ENCODE measurements at regions of chr9 and their contacts with region 1.

Region 1: GRCh38 chr9:35954942-35955546 is 2.9 kb downstream of the OR2S2 start:
- DNase-seq: peak in 1 of 2 experiments; percentile 50
- H3K4me3 ChIP-seq: no peak overlapping the region
- H3K27ac ChIP-seq: no peak overlapping the region
- H3K4me1 ChIP-seq: no peaks in the 10 kb centered on the region
- H3K27me3 ChIP-seq: peaks cover 0 to 2% (median 0%) of the 10 kb centered on the region in 4 experiments; a peak in 1 of 7 replicates
- CTCF ChIP-seq: peak in 2 of 3 experiments; percentile 87 to 88; a peak in 3 of 4 replicates
- EP300 ChIP-seq: no peak
- POLR2A ChIP-seq: no peak
- RAD21 ChIP-seq: peak; percentile 86 to 88

Region 2: DNA sequence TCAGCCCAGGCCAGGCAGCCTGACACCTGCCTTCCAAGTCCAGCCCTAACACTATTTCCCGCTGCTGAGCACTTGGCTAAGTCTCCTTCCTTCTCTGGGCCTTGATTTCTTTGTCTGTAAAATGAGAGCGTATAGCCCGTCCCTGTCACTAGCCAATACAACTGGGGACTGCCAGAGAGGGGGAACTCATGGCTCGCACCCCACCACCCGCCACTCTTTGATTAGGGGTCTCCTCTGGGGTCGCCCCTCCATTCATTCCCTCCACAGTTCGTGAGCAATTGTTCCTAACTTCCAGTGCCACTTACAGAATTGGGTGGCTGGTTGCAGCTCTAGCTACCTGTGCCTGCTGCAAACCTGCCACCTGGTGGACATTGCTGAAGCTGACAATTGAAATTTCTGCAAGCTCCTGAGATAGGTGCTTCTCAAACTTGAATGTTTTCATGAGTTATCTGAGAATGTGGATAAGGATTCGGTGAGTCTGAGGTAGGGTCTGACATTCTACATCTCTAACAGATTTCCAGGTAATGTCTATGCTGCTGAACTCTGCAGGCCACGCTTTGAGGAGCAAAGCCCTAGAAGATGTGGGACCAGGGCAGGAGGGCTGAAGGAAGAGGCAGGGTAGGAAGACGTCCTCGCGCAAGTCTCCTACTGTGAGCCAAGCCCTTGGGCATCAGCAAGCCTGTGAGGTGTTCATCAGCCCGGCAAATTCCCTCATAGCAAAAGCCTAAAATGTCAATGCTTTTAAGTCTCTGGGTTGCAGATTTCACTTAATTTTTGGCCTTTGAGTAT is 68.4 kb after region 1 on chr9:
- CTCF ChIA-PET with region 1: interaction called, 102 read pairs
- POLR2A ChIA-PET with region 1: no interaction called
- DNase-seq: peak in 1 of 2 experiments; percentile 83
- H3K4me3 ChIP-seq: no peak overlapping the region
- H3K27ac ChIP-seq: no peak overlapping the region
- H3K4me1 ChIP-seq: no peaks in the 10 kb centered on the region
- H3K27me3 ChIP-seq: no peaks in the 10 kb centered on the region
- CTCF ChIP-seq: peak; percentile 74 to 95 (median 95)
- EP300 ChIP-seq: no peak
- POLR2A ChIP-seq: no peak
- RAD21 ChIP-seq: peak; percentile 84 to 90

Region 3: GRCh38 chr9:36029765-36030528 is 74.9 kb after region 1 on chr9:
- CTCF ChIA-PET with region 1: interaction called, 102 read pairs
- POLR2A ChIA-PET with region 1: no interaction called
- DNase-seq: no peak
- H3K4me3 ChIP-seq: no peak overlapping the region
- H3K27ac ChIP-seq: no peak overlapping the region
- H3K4me1 ChIP-seq: no peaks in the 10 kb centered on the region
- H3K27me3 ChIP-seq: no peaks in the 10 kb centered on the region
- CTCF ChIP-seq: no peak
- EP300 ChIP-seq: no peak
- POLR2A ChIP-seq: no peak
- RAD21 ChIP-seq: no peak

Measured in H1 (cell line).